ENCODE measurements at regions of chr10 and their contacts with region 1.

Region 1: DNA sequence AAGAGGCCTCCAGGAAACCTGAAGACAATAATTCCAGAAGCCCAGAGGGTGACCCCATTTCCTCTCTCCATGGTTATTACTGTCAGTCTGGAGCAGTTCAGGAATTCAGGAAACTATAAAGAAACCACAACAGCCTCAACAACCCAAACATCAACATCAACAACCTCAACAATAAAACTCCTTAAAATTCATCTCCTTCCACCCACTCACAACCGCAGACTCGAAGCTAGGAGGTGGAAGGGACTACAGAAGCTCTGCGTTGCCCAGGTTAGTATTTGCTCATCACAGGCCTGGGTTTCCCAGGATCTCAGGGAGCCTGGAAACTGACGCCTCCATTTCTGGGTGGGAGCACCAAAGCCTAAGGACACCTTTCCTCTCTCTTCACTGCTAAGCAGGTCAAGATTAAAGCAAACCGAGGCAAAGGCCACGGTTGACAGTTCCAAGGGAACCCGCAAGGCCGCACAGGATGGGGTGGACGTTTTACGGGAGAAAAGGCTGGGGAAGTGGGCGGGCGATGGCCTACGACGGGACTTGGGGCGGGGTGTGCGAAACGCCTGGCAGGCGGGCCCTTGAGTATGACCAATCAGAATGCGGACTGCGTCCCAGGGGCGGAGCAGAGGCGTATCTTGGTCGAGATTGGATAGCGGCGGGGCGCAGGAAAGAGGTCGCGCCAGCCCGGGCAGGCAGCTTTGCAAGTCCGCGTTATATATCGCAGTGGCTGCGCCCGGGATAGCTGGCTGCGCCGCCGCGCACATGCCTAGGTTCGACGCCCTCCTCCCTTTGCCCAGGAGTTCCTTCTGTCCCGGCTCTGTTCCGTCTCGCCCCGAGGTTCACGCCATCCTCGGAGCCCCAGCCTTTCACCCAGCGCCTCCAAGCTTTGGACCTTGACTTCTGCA is at the start of gene ELOVL3:
- DNase-seq: peak; percentile 97
- ATAC-seq: peak; percentile 96
- total RNA-seq, gene ELOVL3: 0.22 TPM

Region 2: DNA sequence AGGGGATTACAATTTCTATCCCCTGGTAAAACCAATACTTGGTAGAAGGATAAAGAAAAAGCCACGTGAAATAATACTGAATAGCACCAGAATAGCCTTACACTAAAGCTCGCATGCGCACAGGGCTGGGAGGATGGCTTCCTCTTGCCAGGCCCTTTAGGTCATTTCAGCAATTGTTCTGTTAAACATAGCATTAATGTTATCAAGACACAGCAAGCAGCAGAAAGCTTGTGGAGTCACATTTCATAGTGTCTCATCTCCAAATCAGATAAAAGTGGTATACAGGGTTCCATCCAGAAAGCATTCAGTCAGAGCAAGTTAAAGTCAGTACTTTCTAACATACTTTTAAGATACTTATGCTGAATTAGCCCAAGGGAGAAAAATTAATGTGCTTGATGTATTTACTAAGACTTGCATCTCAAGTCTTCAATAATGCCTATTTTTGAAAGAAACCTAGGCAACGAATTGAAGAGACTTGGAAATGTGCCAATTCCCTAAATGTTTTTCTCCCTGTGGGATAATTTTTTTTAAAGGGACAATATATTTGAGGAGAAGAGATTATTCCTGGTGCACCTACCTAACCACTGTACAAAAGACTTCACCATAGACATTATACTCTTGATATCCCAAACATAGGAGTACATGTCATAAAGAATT is 428.4 kb before region 1 on chr10:
- intact Hi-C with region 1: no loop called
- DNase-seq: no peak
- ATAC-seq: no peak

Region 3: DNA sequence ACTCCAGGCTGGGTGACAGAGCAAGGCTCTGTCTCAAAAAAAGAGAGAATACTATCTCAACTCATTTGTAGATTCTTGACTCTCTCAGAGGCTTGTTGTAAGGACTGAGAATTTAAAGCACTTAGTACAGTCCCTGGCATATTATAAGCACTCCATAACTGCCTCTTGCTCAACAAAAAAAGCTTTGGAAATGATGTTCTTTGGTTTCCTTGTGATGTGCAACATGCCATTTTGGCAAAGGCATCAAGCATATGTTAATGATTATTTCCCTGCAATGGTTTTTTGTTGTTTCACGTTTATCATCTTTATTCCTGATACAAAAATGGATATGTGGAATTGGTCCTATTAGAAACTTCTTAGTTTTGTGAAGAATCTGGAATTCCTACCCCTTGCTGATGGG is 58.0 kb before region 1 on chr10:
- intact Hi-C with region 1: loop called (anchors 5 kb)
- DNase-seq: no peak
- ATAC-seq: no peak

Region 4: GRCh38 chr10:102268375-102268888 is 42.5 kb after region 1 on chr10:
- intact Hi-C with region 1: no loop called
- DNase-seq: no peak
- ATAC-seq: no peak

Region 5: DNA sequence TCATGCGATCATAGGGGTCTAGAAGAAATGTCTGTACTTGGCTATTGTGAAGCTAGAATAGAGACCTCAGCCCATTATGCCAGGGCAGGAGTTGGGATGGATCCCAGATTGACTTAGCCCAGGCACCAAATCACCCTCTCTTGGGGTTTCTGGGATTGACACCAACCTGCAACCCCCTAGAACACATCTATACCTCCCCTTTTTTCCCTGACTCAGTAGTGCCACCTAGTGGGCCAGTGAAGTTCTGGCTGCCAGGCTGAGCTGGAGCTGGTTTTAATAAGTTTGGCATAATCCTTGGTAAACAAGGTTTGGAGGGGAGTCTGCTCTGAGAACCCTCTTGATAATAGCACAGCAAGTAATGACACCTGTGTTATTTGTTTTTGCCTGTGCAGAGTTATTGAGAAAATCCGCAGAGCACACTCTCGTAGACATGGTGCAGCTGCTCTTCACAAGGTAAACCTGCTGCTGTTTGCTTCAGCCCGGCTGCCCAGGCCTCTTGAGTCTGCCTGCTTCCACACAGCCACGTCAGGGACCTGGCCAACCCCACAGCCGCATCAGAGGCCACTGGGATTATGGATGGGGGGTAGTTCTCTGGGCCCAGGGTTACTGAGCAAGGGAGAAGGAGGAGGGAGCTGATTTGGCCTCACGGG is 126.3 kb after region 1 on chr10:
- intact Hi-C with region 1: loop called (anchors 2 kb)
- DNase-seq: peak; percentile 48
- ATAC-seq: peak; percentile 60

Region 6: DNA sequence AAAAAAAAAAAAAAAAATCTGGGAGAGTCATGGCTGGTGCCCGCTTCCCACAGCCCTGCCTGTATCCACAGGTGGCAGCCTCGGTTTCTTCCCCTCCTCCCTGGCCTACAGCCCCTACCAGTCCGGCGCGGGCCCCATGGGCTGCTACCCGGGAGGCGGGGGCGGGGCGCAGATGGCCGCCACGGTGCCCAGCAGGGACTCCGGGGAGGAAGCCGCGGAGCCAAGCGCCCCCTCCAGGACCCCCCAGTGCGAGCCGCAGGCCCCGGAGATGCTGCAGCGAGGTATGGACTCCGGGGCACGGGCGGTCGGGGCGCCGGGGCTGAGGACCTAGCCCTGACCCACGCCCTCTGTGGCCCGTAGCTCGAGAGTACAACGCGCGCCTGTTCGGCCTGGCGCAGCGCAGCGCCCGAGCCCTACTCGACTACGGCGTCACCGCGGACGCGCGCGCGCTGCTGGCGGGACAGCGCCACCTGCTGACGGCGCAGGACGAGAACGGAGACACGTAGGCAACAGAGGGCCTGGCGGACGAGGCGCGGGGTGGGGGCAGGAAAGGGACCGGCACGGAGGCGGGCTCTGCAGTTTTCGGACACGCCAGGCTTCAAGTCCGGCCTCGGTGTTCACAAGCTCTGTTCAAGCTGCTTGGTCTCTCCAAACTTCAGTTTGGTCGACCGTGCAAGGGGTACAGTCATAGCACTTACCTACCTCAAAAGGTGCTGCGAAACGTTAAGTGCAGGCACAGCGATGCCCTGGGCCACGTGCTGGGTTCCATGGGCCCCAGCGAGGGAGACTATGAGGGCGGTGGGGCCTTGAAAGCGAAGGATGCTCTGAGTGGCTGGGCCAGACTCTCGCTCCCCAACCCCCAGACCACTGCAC is 173.6 kb after region 1 on chr10:
- intact Hi-C with region 1: loop called (anchors 5 kb)
- DNase-seq: peak; percentile 96
- ATAC-seq: peak; percentile 82